ENCODE measurements at regions of chr3 and their contacts with region 1.

Region 1: GRCh38 chr3:192423003-192423349 is 304.4 kb downstream of the FGF12 start:
- DNase-seq: peak; percentile 50
- H3K4me3 ChIP-seq: no peak overlapping the region
- H3K27ac ChIP-seq: no peak overlapping the region
- H3K4me1 ChIP-seq: peaks cover 8% of the 10 kb centered on the region
- H3K27me3 ChIP-seq: peaks cover 0 to 2% of the 10 kb centered on the region in 2 experiments
- CTCF ChIP-seq: peak in 1 of 2 donors; percentile 10
- POLR2A ChIP-seq: no peak

Region 2: GRCh38 chr3:191412759-191413158 is 1010.2 kb before region 1 on chr3:
- CTCF ChIA-PET with region 1: interaction called, 8 read pairs
- POLR2A ChIA-PET with region 1: no interaction called
- dilution Hi-C with region 1: no loop called
- intact Hi-C with region 1: loop called (anchors 1 kb)
- DNase-seq: peak; percentile 97
- H3K4me3 ChIP-seq: no peak overlapping the region
- H3K27ac ChIP-seq: peak overlapping the region; percentile 25
- H3K4me1 ChIP-seq: peaks cover 11% of the 10 kb centered on the region
- H3K27me3 ChIP-seq: no peaks in the 10 kb centered on the region
- CTCF ChIP-seq: no peak
- POLR2A ChIP-seq: no peak

Region 3: DNA sequence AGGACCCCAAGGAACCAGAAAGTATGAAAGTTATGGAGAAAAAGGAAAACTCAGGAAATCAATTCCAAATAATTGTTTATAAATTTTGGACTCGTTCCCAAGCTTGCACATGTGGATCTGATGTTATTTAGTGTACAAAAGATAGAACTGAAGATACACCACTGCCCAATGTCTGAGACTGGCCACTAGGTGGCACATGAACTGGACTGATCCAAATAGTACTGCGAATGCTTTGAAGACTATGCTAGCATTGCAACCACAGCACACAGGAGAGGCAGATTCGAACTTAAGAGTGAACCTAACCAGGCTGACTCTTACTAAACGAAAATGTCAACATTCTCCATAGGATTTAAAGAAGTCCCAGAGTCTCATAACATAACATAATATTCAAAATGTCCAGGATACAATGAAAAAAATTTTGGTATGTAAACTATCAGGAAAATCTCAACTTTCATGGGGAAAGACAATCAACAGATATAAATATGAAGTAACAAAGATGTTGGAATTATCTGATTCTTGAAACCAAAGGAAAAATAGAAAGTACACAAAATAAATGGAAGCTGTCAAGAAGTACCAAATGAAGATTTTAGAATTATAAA is 292.3 kb before region 1 on chr3:
- CTCF ChIA-PET with region 1: interaction called, 25 read pairs
- POLR2A ChIA-PET with region 1: no interaction called
- dilution Hi-C with region 1: no loop called
- intact Hi-C with region 1: loop called (anchors 1 kb)
- DNase-seq: peak; percentile 61
- H3K4me3 ChIP-seq: no peak overlapping the region
- H3K27ac ChIP-seq: no peak overlapping the region
- H3K4me1 ChIP-seq: no peaks in the 10 kb centered on the region
- H3K27me3 ChIP-seq: no peaks in the 10 kb centered on the region
- CTCF ChIP-seq: peak; percentile 72 to 78
- POLR2A ChIP-seq: no peak

Region 4: DNA sequence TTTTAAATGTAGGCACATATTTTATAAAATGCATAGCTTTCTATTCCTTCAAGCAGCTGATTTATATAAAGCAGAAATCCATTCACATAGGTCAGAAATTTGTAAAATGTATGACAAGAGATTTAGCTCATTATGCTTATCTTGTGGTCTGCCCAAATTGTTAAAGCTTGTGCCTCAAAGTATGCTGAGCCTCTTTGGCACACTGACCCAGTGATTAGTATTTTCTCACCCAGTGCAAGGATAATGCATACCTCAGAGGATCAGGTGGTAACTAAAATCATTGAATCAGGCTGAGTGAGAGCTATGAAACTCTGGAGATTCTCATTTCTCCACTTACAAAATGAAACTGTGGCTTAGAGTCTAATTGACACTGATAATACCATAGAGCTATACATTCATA is 228.9 kb before region 1 on chr3:
- CTCF ChIA-PET with region 1: interaction called, 97 read pairs
- POLR2A ChIA-PET with region 1: no interaction called
- dilution Hi-C with region 1: no loop called
- intact Hi-C with region 1: no loop called
- DNase-seq: no peak
- H3K4me3 ChIP-seq: no peak overlapping the region
- H3K27ac ChIP-seq: no peak overlapping the region
- H3K4me1 ChIP-seq: no peaks in the 10 kb centered on the region
- H3K27me3 ChIP-seq: no peaks in the 10 kb centered on the region
- CTCF ChIP-seq: no peak
- POLR2A ChIP-seq: no peak

Region 5: GRCh38 chr3:192237992-192238608 is 184.9 kb before region 1 on chr3:
- CTCF ChIA-PET with region 1: interaction called, 9 read pairs
- POLR2A ChIA-PET with region 1: no interaction called
- dilution Hi-C with region 1: no loop called
- intact Hi-C with region 1: loop called (anchors 1 kb)
- DNase-seq: no peak
- H3K4me3 ChIP-seq: no peak overlapping the region
- H3K27ac ChIP-seq: no peak overlapping the region
- H3K4me1 ChIP-seq: no peaks in the 10 kb centered on the region
- H3K27me3 ChIP-seq: no peaks in the 10 kb centered on the region
- CTCF ChIP-seq: peak in 1 of 2 donors; percentile 34
- POLR2A ChIP-seq: no peak

Region 6: GRCh38 chr3:192433704-192434103 is 10.7 kb after region 1 on chr3:
- CTCF ChIA-PET with region 1: interaction called, 50 read pairs
- POLR2A ChIA-PET with region 1: no interaction called
- dilution Hi-C with region 1: no loop called
- intact Hi-C with region 1: no loop called
- DNase-seq: no peak
- H3K4me3 ChIP-seq: no peak overlapping the region
- H3K27ac ChIP-seq: no peak overlapping the region
- H3K4me1 ChIP-seq: no peaks in the 10 kb centered on the region
- H3K27me3 ChIP-seq: peaks cover 3 to 8% of the 10 kb centered on the region in 2 experiments
- CTCF ChIP-seq: no peak
- POLR2A ChIP-seq: no peak

Measured in endothelial cell of umbilical vein (primary cell).